Heart right ventricle (tissue), 16 donors: ENCODE measurements at regions of chr7 and their contacts with region 1.

Region 1: GRCh38 chr7:88942815-88943501 is 147.4 kb upstream of the TEX47 start:
- DNase-seq: no peak
- ATAC-seq: no peak
- H3K4me3 ChIP-seq: no peak overlapping the region
- H3K27ac ChIP-seq: no peak overlapping the region
- H3K4me1 ChIP-seq: no peaks in the 10 kb centered on the region
- H3K27me3 ChIP-seq: no peaks in the 10 kb centered on the region
- CTCF ChIP-seq: no peak

Region 2: GRCh38 chr7:88219781-88220747 is 722.9 kb before region 1 on chr7 and contains the start of gene SRI:
- intact Hi-C with region 1: no loop called
- DNase-seq: peak; percentile 83 to 89
- ATAC-seq: peak; percentile 97 to 100 (median 98)
- H3K4me3 ChIP-seq: peak within 1 kb of the TSS; percentile 89 to 99 (median 94)
- H3K27ac ChIP-seq: peak within 1 kb of the TSS; percentile 74 to 97 (median 92)
- H3K4me1 ChIP-seq: peaks cover 0 to 27% (median 23%) of the 10 kb centered on the region in 9 donors
- H3K27me3 ChIP-seq: no peaks in the 10 kb centered on the region
- CTCF ChIP-seq: peak; percentile 72 to 98 (median 93)
- total RNA-seq, gene SRI: 63.3 to 82.4 (median 69.9) TPM

Region 3: DNA sequence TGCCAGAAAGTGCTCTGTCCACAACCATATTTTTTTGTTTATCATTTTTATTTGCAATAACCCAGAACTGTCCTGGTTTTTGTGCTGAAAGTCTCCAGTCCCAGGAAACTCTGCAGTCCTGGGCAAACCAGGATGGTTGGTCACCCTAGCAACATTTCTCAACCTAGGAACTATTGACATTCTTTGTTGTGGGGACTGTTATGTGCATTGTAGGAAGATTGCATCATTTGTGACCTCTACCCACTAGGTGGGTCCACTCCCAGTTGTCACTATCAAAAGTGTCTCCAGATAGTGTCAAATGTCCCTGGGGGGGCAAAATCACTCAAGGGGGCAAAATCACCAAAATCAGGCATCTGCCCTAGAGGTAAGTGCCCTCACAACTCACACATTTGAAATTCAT is 709.1 kb before region 1 on chr7:
- intact Hi-C with region 1: loop called in 1 of 10 experiments (anchors 10 kb)
- DNase-seq: no peak
- ATAC-seq: no peak
- H3K4me3 ChIP-seq: no peak overlapping the region
- H3K27ac ChIP-seq: no peak overlapping the region
- H3K4me1 ChIP-seq: no peaks in the 10 kb centered on the region
- H3K27me3 ChIP-seq: no peaks in the 10 kb centered on the region
- CTCF ChIP-seq: no peak

Region 4: DNA sequence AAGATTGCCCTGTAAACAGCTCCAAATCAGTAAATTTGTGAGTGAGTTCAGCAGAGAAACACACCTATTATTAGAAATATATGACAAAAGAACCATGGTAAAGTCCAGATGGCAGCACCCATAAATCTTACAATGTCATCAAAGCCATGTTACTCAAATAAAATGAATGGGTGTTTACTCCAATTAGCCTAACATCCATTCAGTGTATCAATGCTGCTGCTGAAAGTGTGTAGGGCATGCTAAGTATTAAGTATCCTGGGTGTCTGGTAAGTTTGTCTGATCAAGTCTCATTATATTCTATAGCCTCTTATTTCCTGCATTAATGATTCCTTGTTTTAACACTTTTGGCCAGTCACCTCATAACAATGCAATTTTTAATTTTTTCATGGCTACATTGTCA is 450.8 kb before region 1 on chr7:
- intact Hi-C with region 1: no loop called
- DNase-seq: no peak
- ATAC-seq: no peak
- H3K4me3 ChIP-seq: no peak overlapping the region
- H3K27ac ChIP-seq: no peak overlapping the region
- H3K4me1 ChIP-seq: no peaks in the 10 kb centered on the region
- H3K27me3 ChIP-seq: peaks cover 0 to 3% (median 0%) of the 10 kb centered on the region in 7 donors
- CTCF ChIP-seq: no peak

Region 5: GRCh38 chr7:89029864-89030263 is 86.9 kb after region 1 on chr7:
- intact Hi-C with region 1: no loop called
- DNase-seq: no peak
- ATAC-seq: no peak
- H3K4me3 ChIP-seq: no peak overlapping the region
- H3K27ac ChIP-seq: no peak overlapping the region
- H3K4me1 ChIP-seq: no peaks in the 10 kb centered on the region
- H3K27me3 ChIP-seq: no peaks in the 10 kb centered on the region
- CTCF ChIP-seq: no peak

Region 6: GRCh38 chr7:89085580-89085979 is 142.6 kb after region 1 on chr7:
- intact Hi-C with region 1: no loop called
- DNase-seq: no peak
- ATAC-seq: no peak
- H3K4me3 ChIP-seq: no peak overlapping the region
- H3K27ac ChIP-seq: no peak overlapping the region
- H3K4me1 ChIP-seq: no peaks in the 10 kb centered on the region
- H3K27me3 ChIP-seq: no peaks in the 10 kb centered on the region
- CTCF ChIP-seq: no peak